Prostate gland (tissue), 2 donors: ENCODE measurements at regions of chr1 and their contacts with region 1.

Region 1: DNA sequence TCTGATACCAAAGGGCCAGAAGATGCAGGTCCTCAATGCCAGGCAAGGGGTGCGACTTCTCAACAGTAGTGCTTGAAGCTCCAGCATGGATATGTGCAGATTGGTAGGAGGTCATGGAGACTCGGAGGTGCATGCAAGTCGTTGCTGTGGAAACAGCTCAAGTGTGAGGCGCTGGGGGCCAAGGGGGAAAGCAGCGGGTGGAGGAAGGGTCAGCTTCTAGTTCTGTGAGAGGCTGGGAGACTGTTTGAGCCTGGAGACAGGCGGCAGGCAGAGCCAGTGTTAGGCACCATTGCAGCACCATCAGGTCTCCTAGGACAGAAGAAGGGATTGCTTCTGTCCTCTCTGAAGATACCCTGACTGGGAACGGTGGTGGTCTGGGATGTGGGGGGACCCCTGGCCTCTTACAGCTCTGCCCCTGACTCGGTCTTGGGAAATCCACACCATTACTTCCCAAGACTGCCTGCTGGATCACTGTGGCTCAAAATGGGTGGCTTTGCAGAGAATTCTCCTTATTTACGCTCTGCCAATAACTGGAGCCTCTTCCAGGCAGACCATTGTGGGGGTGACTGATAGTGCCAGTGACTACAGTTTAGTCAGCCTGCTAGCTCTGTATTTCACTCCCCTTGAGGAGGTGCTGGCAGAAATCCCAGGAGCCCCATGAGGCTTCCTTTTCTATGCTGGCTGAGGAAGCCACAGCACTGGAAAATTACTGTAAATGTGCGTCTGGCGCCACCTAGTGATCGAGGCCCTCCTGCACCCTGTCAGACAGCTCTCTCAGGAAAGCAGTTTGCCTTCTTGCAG is 46.3 kb upstream of the VANGL1 start:
- DNase-seq: peak; percentile 72
- H3K4me3 ChIP-seq: no peak overlapping the region
- H3K27ac ChIP-seq: no peak overlapping the region
- H3K4me1 ChIP-seq: no peaks in the 10 kb centered on the region
- H3K27me3 ChIP-seq: no peaks in the 10 kb centered on the region
- CTCF ChIP-seq: peak; percentile 51 to 88 (median 82)
- POLR2A ChIP-seq: no peak

Region 2: DNA sequence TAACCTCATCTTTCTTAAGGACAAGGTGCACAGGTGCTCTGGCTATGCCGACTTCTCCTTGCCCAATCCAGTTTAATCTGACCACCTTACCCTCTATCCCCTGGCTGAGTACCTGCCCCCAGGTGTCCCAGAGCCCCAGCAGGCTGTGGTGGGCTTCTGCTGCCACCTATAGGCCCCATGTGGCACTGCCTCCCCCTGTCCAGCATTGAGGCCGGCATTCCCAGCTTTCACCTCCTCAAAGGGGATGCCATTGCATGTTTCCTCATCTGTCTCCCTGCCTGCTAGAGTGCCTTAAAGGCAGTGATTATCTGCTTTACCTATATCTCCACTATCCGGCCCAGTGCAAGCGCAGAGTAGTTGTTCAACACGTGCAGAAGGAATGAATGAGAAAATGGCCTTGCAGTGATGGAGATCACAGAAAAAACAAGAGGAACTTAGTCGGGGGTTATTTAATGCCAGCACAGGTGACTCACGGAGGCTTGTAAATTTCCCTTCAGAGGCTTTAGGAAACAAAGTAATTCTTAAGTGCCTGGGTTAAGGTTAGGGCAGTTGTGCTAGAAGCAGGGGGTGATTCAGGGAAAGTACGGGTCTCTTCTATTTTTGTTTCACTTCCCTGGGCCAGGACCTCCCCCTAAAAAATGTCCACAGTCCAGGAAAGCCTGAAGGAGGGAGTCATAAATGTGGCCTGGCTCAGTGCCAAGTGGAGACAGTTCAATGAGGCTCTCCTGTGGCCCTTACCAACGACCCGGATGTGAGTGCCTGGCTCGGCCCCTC is 125.6 kb before region 1 on chr1:
- intact Hi-C with region 1: loop called (anchors 10 kb)
- DNase-seq: no peak
- H3K4me3 ChIP-seq: no peak overlapping the region
- H3K27ac ChIP-seq: no peak overlapping the region
- H3K4me1 ChIP-seq: no peaks in the 10 kb centered on the region
- H3K27me3 ChIP-seq: no peaks in the 10 kb centered on the region
- CTCF ChIP-seq: peak; percentile 35 to 75 (median 72)
- POLR2A ChIP-seq: no peak